AG04450 (cell line): ENCODE measurements at regions of chr9 and their contacts with region 1.

Region 1: GRCh38 chr9:21317956-21318923 is 13.1 kb upstream of the IFNA5 start:
- DNase-seq: no peak
- H3K4me3 ChIP-seq: no peak overlapping the region
- H3K27ac ChIP-seq: no peak overlapping the region
- H3K27me3 ChIP-seq: peaks cover 5% of the 10 kb centered on the region
- CTCF ChIP-seq: peak; percentile 75

Region 2: DNA sequence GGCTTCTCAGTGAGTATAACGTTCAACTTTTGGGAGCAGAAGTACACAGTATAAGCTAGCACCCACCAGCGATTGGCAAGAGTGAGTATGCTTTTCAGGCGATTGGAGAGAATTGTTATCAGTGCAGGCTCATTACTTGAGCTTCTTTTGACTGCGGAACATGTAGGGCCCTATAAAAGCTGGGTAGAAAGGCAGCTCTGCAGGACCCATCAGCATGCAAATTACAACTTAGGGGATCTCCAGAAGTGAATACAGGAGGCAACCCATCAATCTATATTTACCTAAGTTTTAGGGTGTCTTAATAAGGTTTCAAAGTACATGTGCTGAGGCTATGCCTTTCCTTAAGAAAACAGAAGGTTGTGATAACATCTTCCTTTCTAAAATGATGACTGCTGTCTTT is 920.9 kb before region 1 on chr9:
- CTCF ChIA-PET with region 1: interaction called, 11 read pairs
- POLR2A ChIA-PET with region 1: no interaction called
- DNase-seq: no peak
- H3K4me3 ChIP-seq: no peak overlapping the region
- H3K27ac ChIP-seq: no peak overlapping the region
- H3K27me3 ChIP-seq: no peaks in the 10 kb centered on the region
- CTCF ChIP-seq: no peak

Region 3: DNA sequence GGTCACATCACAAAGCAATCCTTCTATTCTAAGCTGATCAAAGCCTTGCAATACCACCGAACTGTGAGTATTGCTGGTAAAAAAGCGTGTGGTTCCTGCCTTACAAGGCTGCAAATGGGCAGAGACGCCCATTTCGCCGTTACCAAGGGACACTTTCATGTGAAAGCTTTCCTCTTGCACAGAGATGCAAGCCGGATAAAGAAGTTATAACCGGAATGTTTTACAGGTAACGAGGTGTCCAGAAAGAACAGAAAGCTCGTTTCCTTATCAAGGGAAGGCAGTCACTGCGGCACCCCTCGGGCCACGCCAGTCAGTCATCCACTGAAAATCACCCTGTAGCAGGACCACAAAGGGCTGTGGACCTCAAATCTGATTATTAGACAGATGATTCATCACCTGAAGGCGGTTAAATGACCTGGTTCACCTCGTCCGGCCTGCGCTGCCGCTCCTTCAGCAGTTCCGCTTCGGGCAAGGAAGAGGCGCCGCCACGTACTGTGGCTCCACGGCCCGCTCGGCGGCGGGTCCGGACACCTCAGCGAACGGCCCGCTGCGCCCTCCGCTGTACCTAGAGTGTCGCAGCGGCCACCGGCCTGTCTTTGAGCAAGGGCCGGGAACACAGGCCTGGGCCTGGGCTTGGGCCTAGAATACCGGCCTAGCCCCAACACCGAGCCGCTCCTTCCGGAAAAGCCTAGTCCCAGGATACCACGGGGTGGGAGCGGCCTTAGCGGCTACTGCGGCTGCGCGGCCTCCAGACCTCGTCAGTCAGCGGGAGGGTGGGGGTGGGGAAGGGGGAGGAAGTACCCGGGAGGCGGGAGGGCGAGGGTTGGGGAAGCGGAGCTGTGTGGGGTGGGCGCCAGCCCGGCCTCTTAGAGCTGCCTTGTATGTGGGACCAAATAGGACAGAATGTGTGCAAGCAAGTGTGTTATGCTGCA is 16.7 kb after region 1 on chr9 and contains the start of gene KLHL9:
- CTCF ChIA-PET with region 1: interaction called, 34 read pairs
- POLR2A ChIA-PET with region 1: no interaction called
- DNase-seq: peak; percentile 82
- H3K4me3 ChIP-seq: peak within 1 kb of the TSS; percentile 84
- H3K27ac ChIP-seq: peak within 1 kb of the TSS; percentile 81
- H3K27me3 ChIP-seq: no peaks in the 10 kb centered on the region
- CTCF ChIP-seq: no peak
- polyA plus RNA-seq, gene KLHL9: 32.4 and 42.2 TPM in 2 replicates